ENCODE measurements at regions of chr12 and their contacts with region 1.

Region 1: GRCh38 chr12:57983146-57983857 is 41.9 kb downstream of the ATP23 start:
- DNase-seq: peak; percentile 60
- H3K4me3 ChIP-seq: no peak overlapping the region
- H3K27ac ChIP-seq: no peak overlapping the region
- H3K4me1 ChIP-seq: no peaks in the 10 kb centered on the region
- H3K27me3 ChIP-seq: no peaks in the 10 kb centered on the region
- CTCF ChIP-seq: peak; percentile 82

Region 2: DNA sequence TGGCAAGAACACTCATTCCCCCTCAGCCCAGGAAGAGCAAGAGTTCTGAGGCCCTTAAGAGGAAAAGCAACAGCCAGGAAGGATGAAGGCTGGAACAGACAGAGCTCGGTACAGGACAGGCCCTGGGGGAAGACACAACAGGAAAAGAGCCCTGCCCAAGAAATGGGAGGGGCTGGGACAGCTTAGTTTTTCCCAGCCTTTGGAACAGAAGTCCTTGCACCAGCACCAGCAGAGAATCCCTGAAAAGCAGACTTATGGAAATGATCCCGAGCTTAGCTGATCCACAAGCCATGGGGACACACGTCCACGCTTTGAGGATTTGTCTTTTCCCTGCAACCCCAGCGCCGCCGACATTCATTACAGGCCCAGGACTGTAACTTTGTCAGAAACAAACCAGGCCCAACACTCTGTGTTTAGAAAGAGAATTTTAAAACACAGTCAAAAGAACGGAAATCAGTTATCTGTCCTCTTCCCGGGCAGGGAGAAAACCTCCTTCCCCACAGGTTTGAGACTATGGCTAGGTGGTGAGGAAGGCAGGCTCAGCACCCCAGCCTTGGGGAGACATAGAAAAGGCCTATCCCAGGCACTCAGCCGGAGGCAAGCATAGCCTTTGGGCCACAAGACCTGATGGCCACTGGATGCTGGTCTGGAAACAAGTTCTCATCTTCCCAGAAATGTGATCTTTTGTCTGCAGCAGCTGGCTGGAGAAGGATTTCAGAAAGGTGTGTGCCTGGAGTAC is 160.7 kb before region 1 on chr12:
- CTCF ChIA-PET with region 1: no interaction called
- POLR2A ChIA-PET with region 1: no interaction called
- intact Hi-C with region 1: no loop called
- DNase-seq: no peak
- H3K4me3 ChIP-seq: no peak overlapping the region
- H3K27ac ChIP-seq: no peak overlapping the region
- H3K4me1 ChIP-seq: no peaks in the 10 kb centered on the region
- H3K27me3 ChIP-seq: no peaks in the 10 kb centered on the region
- CTCF ChIP-seq: no peak

Region 3: DNA sequence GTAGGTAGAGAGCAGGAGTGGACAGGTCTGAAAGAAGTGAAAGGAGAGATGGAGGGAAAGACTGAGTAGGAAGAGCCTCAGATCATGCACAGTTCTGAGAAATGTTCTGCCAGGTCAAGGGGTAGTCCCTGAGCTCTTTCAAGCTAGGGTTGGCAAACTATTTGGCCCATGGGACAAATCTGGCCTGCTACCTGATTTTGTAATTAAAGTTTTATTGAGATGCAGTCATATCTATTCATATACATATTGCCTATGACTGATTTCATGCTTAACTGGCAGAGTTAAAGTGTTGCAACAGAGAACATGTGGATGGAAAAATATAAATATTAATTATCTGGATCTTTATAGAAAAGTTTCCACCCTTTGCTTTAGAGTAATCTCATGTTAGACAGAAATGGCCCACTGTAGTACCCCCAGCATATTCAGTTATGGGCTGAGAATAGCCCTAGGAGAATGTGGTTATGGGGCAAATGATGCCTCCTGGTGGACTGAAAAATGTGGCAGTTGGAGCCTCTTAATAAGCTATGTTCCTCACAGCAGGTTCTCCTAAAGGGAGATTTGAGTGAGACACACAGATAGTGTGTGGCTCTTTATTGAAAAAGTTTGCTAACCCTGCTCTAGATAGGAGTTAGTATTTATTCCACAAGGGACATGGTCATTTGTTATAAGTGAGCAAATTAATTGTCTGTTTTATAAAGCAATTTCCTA is 460.1 kb after region 1 on chr12:
- CTCF ChIA-PET with region 1: no interaction called
- POLR2A ChIA-PET with region 1: no interaction called
- intact Hi-C with region 1: loop called (anchors 5 kb)
- DNase-seq: peak; percentile 57
- H3K4me3 ChIP-seq: no peak overlapping the region
- H3K27ac ChIP-seq: no peak overlapping the region
- H3K4me1 ChIP-seq: no peaks in the 10 kb centered on the region
- H3K27me3 ChIP-seq: no peaks in the 10 kb centered on the region
- CTCF ChIP-seq: peak; percentile 76

Region 4: DNA sequence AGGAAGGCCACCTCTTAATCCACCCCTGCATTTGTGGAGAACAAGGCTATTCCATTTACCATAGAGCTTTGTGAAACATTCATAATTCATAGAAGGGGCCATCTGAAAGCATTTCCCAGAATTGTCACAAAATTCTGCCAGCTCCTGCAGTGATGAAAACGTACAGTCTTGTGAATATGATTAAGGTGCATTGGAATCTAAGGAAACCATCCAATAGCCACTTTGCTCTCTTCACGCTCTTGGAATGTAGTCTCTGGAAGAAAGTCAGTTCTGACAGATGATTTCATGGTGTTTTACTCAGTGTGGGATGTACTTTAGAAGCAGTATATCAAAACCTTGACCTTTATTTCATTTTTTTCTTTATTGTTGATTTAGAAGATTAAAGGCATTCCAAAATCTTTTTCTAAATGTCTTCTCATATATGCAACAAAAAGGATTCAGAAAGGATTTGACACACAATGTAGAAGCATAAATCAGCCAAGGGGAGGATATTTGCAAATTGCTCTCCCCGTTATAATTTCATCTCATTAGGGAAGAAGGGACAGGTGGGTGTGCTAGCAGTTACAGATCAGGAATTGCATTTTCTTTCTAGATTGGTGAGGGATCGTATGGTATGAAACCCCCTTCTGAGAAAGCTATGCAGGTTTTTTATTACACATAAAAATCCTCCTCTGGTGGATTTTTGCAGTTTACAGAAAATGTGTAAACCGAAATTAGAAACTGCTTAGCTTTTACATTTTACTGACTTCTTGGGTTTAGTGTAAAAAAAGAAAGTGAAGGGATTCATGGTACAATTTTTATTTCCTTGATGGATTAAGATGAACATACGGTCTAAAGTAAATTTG is 546.8 kb after region 1 on chr12:
- CTCF ChIA-PET with region 1: no interaction called
- POLR2A ChIA-PET with region 1: no interaction called
- intact Hi-C with region 1: loop called (anchors 10 kb)
- DNase-seq: peak; percentile 20
- H3K4me3 ChIP-seq: no peak overlapping the region
- H3K27ac ChIP-seq: no peak overlapping the region
- H3K4me1 ChIP-seq: no peaks in the 10 kb centered on the region
- H3K27me3 ChIP-seq: no peaks in the 10 kb centered on the region
- CTCF ChIP-seq: no peak

Region 5: DNA sequence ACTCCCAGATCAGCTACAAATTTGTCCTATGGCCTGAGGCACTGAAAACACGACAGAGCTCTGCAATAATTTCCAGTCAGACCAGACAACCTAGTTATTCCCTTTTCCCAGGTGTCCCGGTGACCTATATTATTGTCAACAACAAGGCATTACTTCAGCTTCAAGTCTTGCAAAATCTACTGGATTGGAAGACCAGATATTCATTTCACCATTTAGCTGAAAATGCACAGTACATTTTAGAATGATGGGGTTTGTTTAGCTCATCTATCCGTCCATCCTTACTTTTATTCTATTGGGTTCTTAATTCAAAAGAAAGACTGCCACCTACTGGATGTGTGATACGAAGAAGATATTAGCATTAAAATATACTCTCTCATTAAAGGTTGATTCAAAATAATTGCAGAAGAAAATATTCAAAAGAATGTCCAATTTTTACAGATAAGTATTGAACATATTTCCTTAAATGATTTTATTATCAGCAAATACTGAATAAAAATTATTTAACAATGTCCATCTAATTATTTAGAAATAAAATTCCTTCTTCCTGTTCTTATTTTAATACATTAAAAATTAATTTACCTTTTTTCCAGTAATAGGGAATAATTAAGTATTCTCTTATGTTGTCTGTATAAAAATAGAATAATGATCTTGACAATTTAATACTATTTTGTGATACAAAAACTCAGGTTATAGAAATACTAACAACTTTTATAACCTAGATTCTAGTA is 1181.9 kb after region 1 on chr12:
- CTCF ChIA-PET with region 1: interaction called, 3 read pairs
- POLR2A ChIA-PET with region 1: no interaction called
- intact Hi-C with region 1: loop called (anchors 5 kb)
- DNase-seq: peak; percentile 60
- H3K4me3 ChIP-seq: no peak overlapping the region
- H3K27ac ChIP-seq: no peak overlapping the region
- H3K4me1 ChIP-seq: no peaks in the 10 kb centered on the region
- H3K27me3 ChIP-seq: no peaks in the 10 kb centered on the region
- CTCF ChIP-seq: peak; percentile 66

Measured in A673 (cell line).